ENCODE measurements at regions of chr1 and their contacts with region 1.

Region 1: GRCh38 chr1:18299441-18300338 is 181.0 kb upstream of the KLHDC7A start:
- DNase-seq: no peak
- H3K4me3 ChIP-seq: no peak overlapping the region
- CTCF ChIP-seq: no peak
- POLR2A ChIP-seq: no peak

Region 2: GRCh38 chr1:18575620-18576019 is 275.9 kb after region 1 on chr1:
- intact Hi-C with region 1: loop called (anchors 10 kb)
- DNase-seq: peak in 1 of 2 donors; percentile 92
- H3K4me3 ChIP-seq: no peak overlapping the region
- CTCF ChIP-seq: no peak
- POLR2A ChIP-seq: no peak

Measured in lower leg skin (tissue), 4 donors.